PC-9 (cell line): ENCODE measurements at regions of chr10 and their contacts with region 1.

Region 1: GRCh38 chr10:14782691-14783363 is 8.1 kb upstream of the FAM107B start:
- DNase-seq: peak; percentile 77 to 93
- H3K4me3 ChIP-seq: no peak overlapping the region
- H3K27ac ChIP-seq: peak overlapping the region; percentile 89
- H3K4me1 ChIP-seq: peaks cover 36% of the 10 kb centered on the region
- H3K27me3 ChIP-seq: no peaks in the 10 kb centered on the region
- CTCF ChIP-seq: no peak

Region 2: DNA sequence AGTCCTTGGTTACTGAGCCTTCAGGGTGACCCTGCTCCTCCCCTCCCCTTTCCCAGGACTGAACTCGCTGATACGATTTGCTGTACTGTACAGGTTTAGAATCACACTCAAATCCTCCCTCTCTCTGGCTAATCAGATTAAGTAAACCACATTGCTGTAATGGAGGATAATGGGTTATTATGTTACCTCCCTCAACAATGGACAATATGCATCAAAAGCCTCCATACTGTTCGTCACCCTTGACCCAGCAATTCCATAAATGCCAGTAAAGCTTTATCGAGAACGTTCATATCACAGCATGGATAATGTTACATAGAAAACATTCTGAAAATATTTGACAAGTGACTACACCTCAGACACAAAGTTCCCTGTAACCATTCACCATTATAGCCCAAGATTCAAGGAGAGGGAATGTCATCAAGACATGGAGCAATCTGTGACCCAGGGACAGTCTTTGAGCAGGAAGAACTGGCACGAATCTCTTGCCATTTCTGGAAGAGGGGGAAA is 69.8 kb before region 1 on chr10:
- CTCF ChIA-PET with region 1: no interaction called
- POLR2A ChIA-PET with region 1: no interaction called
- intact Hi-C with region 1: loop called (anchors 2 kb)
- DNase-seq: peak; percentile 54 to 90
- H3K4me3 ChIP-seq: no peak overlapping the region; the same call in 1 of the 2 replicates
- H3K27ac ChIP-seq: peak overlapping the region; percentile 76
- H3K4me1 ChIP-seq: peaks cover 20% of the 10 kb centered on the region
- H3K27me3 ChIP-seq: no peaks in the 10 kb centered on the region
- CTCF ChIP-seq: no peak

Region 3: GRCh38 chr10:14748470-14748869 is 34.4 kb before region 1 on chr10:
- CTCF ChIA-PET with region 1: no interaction called
- POLR2A ChIA-PET with region 1: no interaction called
- intact Hi-C with region 1: loop called (anchors 1 kb)
- DNase-seq: peak; percentile 92 to 93
- H3K4me3 ChIP-seq: no peak overlapping the region
- H3K27ac ChIP-seq: peak overlapping the region; percentile 80
- H3K4me1 ChIP-seq: peaks cover 27% of the 10 kb centered on the region
- H3K27me3 ChIP-seq: no peaks in the 10 kb centered on the region
- CTCF ChIP-seq: no peak

Region 4: DNA sequence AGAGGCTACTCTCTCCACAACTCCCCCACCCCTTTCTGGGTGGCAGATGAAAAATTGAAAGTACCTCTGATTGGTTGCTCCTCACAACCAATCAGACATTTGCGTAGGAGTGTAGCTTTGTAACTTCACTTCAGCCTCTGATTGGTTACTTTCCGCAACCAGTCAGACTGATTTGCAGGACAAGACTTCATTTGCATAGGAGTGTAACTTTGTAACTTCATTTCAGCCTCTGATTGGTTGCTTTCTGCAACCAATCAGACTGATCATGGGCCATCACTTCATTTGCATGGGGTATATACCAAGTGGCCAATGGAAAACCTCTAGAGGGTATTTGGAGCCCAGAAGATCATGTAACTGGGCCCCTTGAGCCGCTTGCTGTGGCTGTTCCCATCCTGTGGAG is 29.4 kb after region 1 on chr10:
- CTCF ChIA-PET with region 1: interaction called, 4 read pairs
- POLR2A ChIA-PET with region 1: no interaction called
- intact Hi-C with region 1: loop called (anchors 2 kb)
- DNase-seq: no peak
- H3K4me3 ChIP-seq: no peak overlapping the region
- H3K27ac ChIP-seq: no peak overlapping the region
- H3K4me1 ChIP-seq: peaks cover 6% of the 10 kb centered on the region; the same call in 1 of the 2 replicates
- H3K27me3 ChIP-seq: no peaks in the 10 kb centered on the region
- CTCF ChIP-seq: no peak

Region 5: DNA sequence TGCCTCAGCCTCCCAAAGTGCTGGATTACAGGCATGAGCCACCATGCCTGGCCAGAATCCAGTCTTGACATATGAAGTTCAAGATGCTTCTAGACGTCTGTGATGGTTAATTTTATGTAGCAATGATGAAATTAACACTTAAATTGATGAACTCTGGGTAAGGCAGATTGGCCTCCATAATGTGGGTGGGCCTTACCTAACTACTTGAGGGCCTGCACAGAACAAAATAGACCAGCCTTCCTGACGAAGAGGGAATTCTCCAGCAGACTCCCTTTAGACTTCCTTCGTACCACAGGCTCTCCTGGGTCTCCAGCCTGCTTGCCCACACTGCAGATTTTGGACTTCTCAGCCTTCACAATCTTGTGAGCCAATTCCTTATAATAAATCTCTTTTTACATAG is 50.3 kb after region 1 on chr10:
- CTCF ChIA-PET with region 1: no interaction called
- POLR2A ChIA-PET with region 1: no interaction called
- intact Hi-C with region 1: no loop called
- DNase-seq: no peak
- H3K4me3 ChIP-seq: no peak overlapping the region
- H3K27ac ChIP-seq: no peak overlapping the region
- H3K4me1 ChIP-seq: peaks cover 10% of the 10 kb centered on the region
- H3K27me3 ChIP-seq: no peaks in the 10 kb centered on the region
- CTCF ChIP-seq: no peak